ENCODE measurements at regions of chr1 and their contacts with region 1.

Region 1: GRCh38 chr1:153556348-153556747 is 7.3 kb upstream of the S100A3 start:
- DNase-seq: no peak
- H3K4me3 ChIP-seq: no peak overlapping the region
- H3K27ac ChIP-seq: no peak overlapping the region
- H3K4me1 ChIP-seq: peaks cover 0 to 22% (median 15%) of the 10 kb centered on the region in 4 experiments
- H3K27me3 ChIP-seq: no peaks in the 10 kb centered on the region

Region 2: GRCh38 chr1:153545067-153546055 is 11.0 kb before region 1 on chr1 and contains the start of gene S100A4:
- CTCF ChIA-PET with region 1: interaction called, 15 read pairs
- POLR2A ChIA-PET with region 1: interaction called, 3 read pairs
- DNase-seq: peak; percentile 83 to 93 (median 92)
- H3K4me3 ChIP-seq: peak within 1 kb of the TSS; percentile 21 to 87 (median 65)
- H3K27ac ChIP-seq: peak within 1 kb of the TSS; percentile 51 to 77
- H3K4me1 ChIP-seq: peaks cover 5 to 100% (median 63%) of the 10 kb centered on the region in 4 experiments
- H3K27me3 ChIP-seq: no peaks in the 10 kb centered on the region